WTC11 (cell line): ENCODE measurements at regions of chr17 and their contacts with region 1.

Region 1: GRCh38 chr17:16046966-16047365 is 47.3 kb downstream of the TTC19 start:
- DNase-seq: no peak
- ATAC-seq: no peak
- H3K4me3 Mint-ChIP-seq: no peak overlapping the region
- H3K27ac Mint-ChIP-seq: no peak overlapping the region
- H3K4me1 Mint-ChIP-seq: peaks cover 22% of the 10 kb centered on the region
- H3K27me3 Mint-ChIP-seq: no peaks in the 10 kb centered on the region
- CTCF ChIP-seq: no peak

Region 2: GRCh38 chr17:16058331-16058730 is 11.4 kb after region 1 on chr17:
- CTCF ChIA-PET with region 1: interaction called, 4 read pairs
- POLR2A ChIA-PET with region 1: interaction called, 10 read pairs
- DNase-seq: no peak
- ATAC-seq: no peak; the same call in 1 of the 2 replicates
- H3K4me3 Mint-ChIP-seq: no peak overlapping the region
- H3K27ac Mint-ChIP-seq: no peak overlapping the region
- H3K4me1 Mint-ChIP-seq: no peaks in the 10 kb centered on the region
- H3K27me3 Mint-ChIP-seq: no peaks in the 10 kb centered on the region
- CTCF ChIP-seq: no peak